CD8-positive, alpha-beta T cell (primary cell): ENCODE measurements at regions of chr13 and their contacts with region 1.

Region 1: GRCh38 chr13:42392716-42393572 is 121.0 kb downstream of the AKAP11 start:
- DNase-seq: peak in 4 of 9 experiments; percentile 31 to 77 (median 62)
- ATAC-seq: peak; percentile 64
- H3K4me3 ChIP-seq: peak overlapping the region in 1 of 2 experiments; percentile 1
- H3K4me3 Mint-ChIP-seq: peak overlapping the region; percentile 0
- H3K27ac ChIP-seq: peak overlapping the region in 1 of 2 experiments; percentile 72
- H3K27ac Mint-ChIP-seq: peak overlapping the region; percentile 69
- H3K4me1 ChIP-seq: peaks cover 51% of the 10 kb centered on the region
- H3K4me1 Mint-ChIP-seq: peaks cover 74% of the 10 kb centered on the region
- H3K27me3 ChIP-seq: no peaks in the 10 kb centered on the region
- H3K27me3 Mint-ChIP-seq: no peaks in the 10 kb centered on the region
- CTCF ChIP-seq: no peak

Region 2: GRCh38 chr13:42377640-42378382 is 15.1 kb before region 1 on chr13:
- CTCF ChIA-PET with region 1: no interaction called
- POLR2A ChIA-PET with region 1: interaction called, 5 read pairs
- intact Hi-C with region 1: loop called in 1 of 2 experiments (anchors 2 kb)
- DNase-seq: peak in 2 of 9 experiments; percentile 73 to 85
- ATAC-seq: peak; percentile 68
- H3K4me3 ChIP-seq: no peak overlapping the region
- H3K4me3 Mint-ChIP-seq: no peak overlapping the region
- H3K27ac ChIP-seq: peak overlapping the region in 1 of 2 experiments; percentile 51
- H3K27ac Mint-ChIP-seq: peak overlapping the region; percentile 6
- H3K4me1 ChIP-seq: no peaks in the 10 kb centered on the region
- H3K4me1 Mint-ChIP-seq: peaks cover 28% of the 10 kb centered on the region
- H3K27me3 ChIP-seq: no peaks in the 10 kb centered on the region
- H3K27me3 Mint-ChIP-seq: no peaks in the 10 kb centered on the region
- CTCF ChIP-seq: no peak

Region 3: GRCh38 chr13:42466123-42466522 is 73.2 kb after region 1 on chr13:
- CTCF ChIA-PET with region 1: no interaction called
- POLR2A ChIA-PET with region 1: no interaction called
- intact Hi-C with region 1: loop called in 1 of 2 experiments (anchors 5 kb)
- DNase-seq: peak in 1 of 9 experiments; percentile 9
- ATAC-seq: no peak
- H3K4me3 ChIP-seq: no peak overlapping the region
- H3K4me3 Mint-ChIP-seq: peak overlapping the region; percentile 16
- H3K27ac ChIP-seq: peak overlapping the region in 1 of 2 experiments; percentile 49
- H3K27ac Mint-ChIP-seq: peak overlapping the region; percentile 42
- H3K4me1 ChIP-seq: peaks cover 13% of the 10 kb centered on the region
- H3K4me1 Mint-ChIP-seq: peaks cover 23% of the 10 kb centered on the region
- H3K27me3 ChIP-seq: no peaks in the 10 kb centered on the region
- H3K27me3 Mint-ChIP-seq: no peaks in the 10 kb centered on the region
- CTCF ChIP-seq: no peak

Region 4: GRCh38 chr13:42762917-42763658 is 370.1 kb after region 1 on chr13:
- CTCF ChIA-PET with region 1: no interaction called
- POLR2A ChIA-PET with region 1: no interaction called
- intact Hi-C with region 1: no loop called
- DNase-seq: no peak
- ATAC-seq: no peak
- H3K4me3 ChIP-seq: no peak overlapping the region
- H3K4me3 Mint-ChIP-seq: no peak overlapping the region
- H3K27ac ChIP-seq: no peak overlapping the region
- H3K27ac Mint-ChIP-seq: no peak overlapping the region
- H3K4me1 ChIP-seq: no peaks in the 10 kb centered on the region
- H3K4me1 Mint-ChIP-seq: no peaks in the 10 kb centered on the region
- H3K27me3 ChIP-seq: no peaks in the 10 kb centered on the region
- H3K27me3 Mint-ChIP-seq: peaks cover 20% of the 10 kb centered on the region
- CTCF ChIP-seq: no peak